Activated CD8-positive, alpha-beta memory T cell treated with anti-CD3 and anti-CD28 coated beads, Interleukin-2, amount 10 ng/mL, durations not matched to agents 7 days and 5 days (primary cell): ENCODE measurements at regions of chr11 and their contacts with region 1.

Region 1: GRCh38 chr11:57345555-57346211 is 7.5 kb downstream of the P2RX3 start:
- DNase-seq: peak; percentile 71
- ATAC-seq: peak; percentile 65
- H3K4me3 Mint-ChIP-seq: no peak overlapping the region
- H3K27ac Mint-ChIP-seq: no peak overlapping the region
- H3K4me1 Mint-ChIP-seq: peaks cover 3% of the 10 kb centered on the region
- H3K27me3 Mint-ChIP-seq: no peaks in the 10 kb centered on the region

Region 2: GRCh38 chr11:56910785-56911184 is 434.9 kb before region 1 on chr11:
- CTCF ChIA-PET with region 1: no interaction called
- DNase-seq: no peak
- ATAC-seq: no peak
- H3K4me3 Mint-ChIP-seq: no peak overlapping the region
- H3K27ac Mint-ChIP-seq: no peak overlapping the region
- H3K4me1 Mint-ChIP-seq: no peaks in the 10 kb centered on the region
- H3K27me3 Mint-ChIP-seq: no peaks in the 10 kb centered on the region

Region 3: GRCh38 chr11:57277845-57278709 is 67.6 kb before region 1 on chr11:
- CTCF ChIA-PET with region 1: no interaction called
- DNase-seq: peak; percentile 48
- ATAC-seq: peak; percentile 27
- H3K4me3 Mint-ChIP-seq: no peak overlapping the region
- H3K27ac Mint-ChIP-seq: no peak overlapping the region
- H3K4me1 Mint-ChIP-seq: peaks cover 8% of the 10 kb centered on the region
- H3K27me3 Mint-ChIP-seq: peaks cover 21% of the 10 kb centered on the region

Region 4: GRCh38 chr11:57324886-57325734 is 20.6 kb before region 1 on chr11 and contains the start of gene TNKS1BP1:
- CTCF ChIA-PET with region 1: interaction called, 13 read pairs
- DNase-seq: peak; percentile 92
- ATAC-seq: peak; percentile 91
- H3K4me3 Mint-ChIP-seq: peak within 1 kb of the TSS; percentile 87
- H3K27ac Mint-ChIP-seq: peak within 1 kb of the TSS; percentile 96
- H3K4me1 Mint-ChIP-seq: peaks cover 29% of the 10 kb centered on the region
- H3K27me3 Mint-ChIP-seq: no peaks in the 10 kb centered on the region
- total RNA-seq, gene TNKS1BP1: 4.4 to 5.8 TPM

Region 5: DNA sequence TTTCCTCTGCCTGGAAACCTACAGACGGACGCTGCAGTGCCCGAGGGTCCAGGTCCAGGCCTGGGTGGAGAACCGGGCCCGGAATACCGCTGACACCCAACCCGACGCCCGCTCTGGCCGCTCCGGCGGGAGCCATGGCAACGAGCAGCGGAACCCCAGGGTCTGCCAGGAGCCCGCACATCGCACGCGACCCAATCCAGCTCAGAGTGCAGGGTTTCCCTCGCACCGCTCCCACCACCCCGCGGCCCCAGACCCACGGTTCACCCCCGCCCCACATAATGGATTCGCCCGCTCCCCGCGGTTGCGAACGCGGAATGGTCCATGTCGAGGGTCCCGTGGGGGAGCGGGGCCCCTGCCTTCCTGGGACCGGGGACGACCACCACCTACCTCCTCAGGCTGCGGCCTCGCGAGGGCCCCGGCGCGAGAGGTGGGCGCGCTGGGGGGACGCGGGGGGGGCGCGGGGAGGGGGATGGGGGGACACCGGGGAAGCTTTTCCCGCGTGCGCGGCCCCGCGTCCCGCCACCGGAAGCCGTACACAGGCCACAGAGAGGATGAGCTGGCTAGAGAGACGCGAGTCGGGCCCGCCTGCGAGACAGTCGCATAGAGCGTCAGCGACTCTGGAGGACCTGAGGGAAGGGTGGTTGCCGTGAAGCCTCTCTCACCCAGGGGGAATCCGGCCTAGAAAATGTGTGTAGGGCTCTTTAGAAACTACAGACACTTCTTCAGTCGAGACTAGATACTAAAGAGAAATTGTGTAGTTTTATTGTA is 10.2 kb before region 1 on chr11 and contains the start of gene SSRP1:
- CTCF ChIA-PET with region 1: interaction called, 13 read pairs
- DNase-seq: peak; percentile 93
- ATAC-seq: peak; percentile 98
- H3K4me3 Mint-ChIP-seq: peak within 1 kb of the TSS; percentile 94
- H3K27ac Mint-ChIP-seq: peak within 1 kb of the TSS; percentile 92
- H3K4me1 Mint-ChIP-seq: peaks cover 41% of the 10 kb centered on the region
- H3K27me3 Mint-ChIP-seq: peaks cover 5% of the 10 kb centered on the region
- total RNA-seq, gene SSRP1: 158 to 196 TPM

Region 6: DNA sequence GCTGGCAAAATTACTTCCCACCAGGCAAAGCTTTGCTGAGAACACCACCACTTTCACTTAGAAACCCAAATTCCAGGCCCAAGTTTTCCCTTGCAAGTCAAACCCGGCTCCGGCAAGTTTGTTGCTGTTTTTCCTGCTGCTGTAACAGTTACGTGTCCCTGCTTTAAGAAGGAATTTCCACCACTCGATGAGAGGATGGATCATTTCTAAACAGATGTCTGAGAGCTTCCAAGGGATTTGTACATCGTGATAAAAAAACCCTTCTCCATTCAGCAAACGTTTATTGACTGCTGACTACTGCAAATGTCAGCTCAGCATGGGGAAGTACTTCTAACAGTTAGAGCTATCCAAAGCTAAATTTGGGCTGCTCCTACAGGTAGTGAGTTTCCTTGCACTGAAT is 12.2 kb after region 1 on chr11:
- CTCF ChIA-PET with region 1: interaction called, 18 read pairs
- DNase-seq: no peak
- ATAC-seq: no peak
- H3K4me3 Mint-ChIP-seq: no peak overlapping the region
- H3K27ac Mint-ChIP-seq: no peak overlapping the region
- H3K4me1 Mint-ChIP-seq: no peaks in the 10 kb centered on the region
- H3K27me3 Mint-ChIP-seq: peaks cover 26% of the 10 kb centered on the region

Region 7: GRCh38 chr11:57370251-57370650 is 24.6 kb after region 1 on chr11:
- CTCF ChIA-PET with region 1: no interaction called
- DNase-seq: no peak
- ATAC-seq: no peak
- H3K4me3 Mint-ChIP-seq: no peak overlapping the region
- H3K27ac Mint-ChIP-seq: no peak overlapping the region
- H3K4me1 Mint-ChIP-seq: no peaks in the 10 kb centered on the region
- H3K27me3 Mint-ChIP-seq: no peaks in the 10 kb centered on the region

Region 8: GRCh38 chr11:57480409-57481137 is 134.9 kb after region 1 on chr11:
- CTCF ChIA-PET with region 1: interaction called, 11 read pairs
- DNase-seq: peak; percentile 86
- ATAC-seq: peak; percentile 70
- H3K4me3 Mint-ChIP-seq: no peak overlapping the region
- H3K27ac Mint-ChIP-seq: no peak overlapping the region
- H3K4me1 Mint-ChIP-seq: peaks cover 15% of the 10 kb centered on the region
- H3K27me3 Mint-ChIP-seq: peaks cover 49% of the 10 kb centered on the region

Region 9: DNA sequence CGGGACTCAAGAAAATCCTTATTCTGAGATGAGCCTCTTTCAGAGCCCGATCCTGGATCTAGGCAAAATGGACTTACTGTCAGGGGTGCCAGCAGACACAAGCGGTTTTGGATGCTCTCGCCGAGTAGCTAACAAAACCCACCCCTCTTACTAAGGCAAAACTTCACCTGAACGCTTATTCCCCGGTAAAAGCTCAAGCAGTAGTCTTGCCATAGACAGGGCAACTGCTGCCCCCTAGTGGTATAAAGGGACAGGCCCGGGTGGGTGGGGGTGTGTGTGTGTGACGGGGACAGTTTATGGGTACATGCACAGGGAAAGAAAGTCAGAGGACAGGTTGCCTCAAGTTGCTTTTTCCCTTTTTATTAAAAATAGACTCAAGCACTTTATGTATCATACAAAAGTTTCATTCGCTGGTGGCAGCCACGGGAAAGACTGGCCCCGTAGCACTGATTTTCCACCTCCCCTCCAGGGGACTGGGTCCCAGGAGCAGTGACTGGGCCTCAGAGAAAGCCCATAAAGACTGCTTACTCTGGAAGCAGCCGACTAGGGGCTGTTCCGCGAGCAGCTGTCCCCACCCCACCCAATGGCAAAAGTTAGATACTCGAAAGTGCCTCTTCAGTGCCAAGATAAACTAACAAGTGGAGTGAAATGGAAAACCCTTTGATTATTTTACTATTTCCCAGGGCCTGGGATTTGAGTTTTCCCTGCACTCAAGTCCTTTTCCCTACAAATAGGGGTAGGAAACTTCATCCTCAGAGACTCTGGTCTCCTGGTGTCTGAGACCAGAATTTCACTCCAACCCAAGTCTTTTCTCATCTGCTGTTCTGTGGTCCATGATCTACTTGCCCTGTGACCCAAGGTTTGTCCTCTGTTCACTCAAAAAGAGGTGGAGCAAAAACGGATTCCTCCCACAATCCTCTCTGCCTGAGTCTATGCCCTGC is 299.3 kb after region 1 on chr11:
- CTCF ChIA-PET with region 1: interaction called, 11 read pairs
- DNase-seq: peak; percentile 90
- ATAC-seq: peak; percentile 83
- H3K4me3 Mint-ChIP-seq: no peak overlapping the region
- H3K27ac Mint-ChIP-seq: no peak overlapping the region
- H3K4me1 Mint-ChIP-seq: peaks cover 33% of the 10 kb centered on the region
- H3K27me3 Mint-ChIP-seq: peaks cover 64% of the 10 kb centered on the region

Region 10: GRCh38 chr11:57657194-57658022 is 311.7 kb after region 1 on chr11 and contains the start of gene CLP1:
- CTCF ChIA-PET with region 1: no interaction called
- DNase-seq: peak; percentile 99
- ATAC-seq: peak; percentile 98
- H3K4me3 Mint-ChIP-seq: peak within 1 kb of the TSS; percentile 94
- H3K27ac Mint-ChIP-seq: peak within 1 kb of the TSS; percentile 93
- H3K4me1 Mint-ChIP-seq: peaks cover 44% of the 10 kb centered on the region
- H3K27me3 Mint-ChIP-seq: no peaks in the 10 kb centered on the region
- total RNA-seq, gene CLP1: 15.7 to 22.6 TPM